ENCODE measurements at regions of chr10 and their contacts with region 1.

Region 1: DNA sequence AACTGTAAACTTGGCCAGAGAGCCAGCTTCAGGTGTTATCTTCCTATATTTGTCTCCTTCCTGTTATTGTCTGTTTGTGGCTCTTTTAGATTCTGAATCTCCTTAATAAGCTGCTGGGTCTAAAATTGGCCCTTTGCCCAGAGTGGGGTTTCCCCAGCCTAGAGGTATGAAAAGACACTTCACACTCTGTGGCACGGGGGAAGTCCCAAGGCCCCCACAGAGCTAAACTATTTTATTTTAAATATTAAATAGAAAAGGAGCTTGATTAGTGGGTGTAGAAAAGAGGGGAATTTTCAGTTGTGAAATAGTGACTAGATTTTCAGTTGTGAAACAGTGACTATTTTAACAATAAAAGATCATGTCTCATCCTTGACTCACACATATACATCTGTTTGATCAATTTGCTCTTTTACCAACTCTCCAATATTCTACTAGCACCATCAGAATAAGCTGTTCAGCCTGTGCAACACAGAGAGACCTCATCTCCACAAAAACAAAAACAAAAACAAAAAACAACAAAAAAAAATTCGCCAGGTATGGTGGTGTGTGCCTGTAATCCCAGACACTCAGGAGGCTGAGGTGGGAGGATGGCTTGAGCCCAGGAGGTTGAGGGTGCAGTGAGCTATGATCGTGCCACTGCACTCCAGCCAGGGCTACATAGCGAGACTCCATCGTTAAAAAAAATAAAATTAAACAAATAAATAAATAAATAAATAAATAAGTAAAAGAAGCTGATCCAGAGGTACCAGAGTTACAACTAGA is 24.9 kb upstream of the ADO start:
- DNase-seq: peak; percentile 91
- ATAC-seq: peak; percentile 99
- H3K4me3 ChIP-seq: peak overlapping the region in 1 of 5 experiments; percentile 21
- H3K4me3 Mint-ChIP-seq: peak overlapping the region; percentile 35
- H3K27ac ChIP-seq: peak overlapping the region; percentile 38 to 60
- H3K27ac Mint-ChIP-seq: peak overlapping the region; percentile 47
- H3K4me1 ChIP-seq: peaks cover 25 to 27% of the 10 kb centered on the region in 2 donors
- H3K4me1 Mint-ChIP-seq: peaks cover 33% of the 10 kb centered on the region
- H3K27me3 ChIP-seq: no peaks in the 10 kb centered on the region
- H3K27me3 Mint-ChIP-seq: no peaks in the 10 kb centered on the region
- CTCF ChIP-seq: no peak

Region 2: DNA sequence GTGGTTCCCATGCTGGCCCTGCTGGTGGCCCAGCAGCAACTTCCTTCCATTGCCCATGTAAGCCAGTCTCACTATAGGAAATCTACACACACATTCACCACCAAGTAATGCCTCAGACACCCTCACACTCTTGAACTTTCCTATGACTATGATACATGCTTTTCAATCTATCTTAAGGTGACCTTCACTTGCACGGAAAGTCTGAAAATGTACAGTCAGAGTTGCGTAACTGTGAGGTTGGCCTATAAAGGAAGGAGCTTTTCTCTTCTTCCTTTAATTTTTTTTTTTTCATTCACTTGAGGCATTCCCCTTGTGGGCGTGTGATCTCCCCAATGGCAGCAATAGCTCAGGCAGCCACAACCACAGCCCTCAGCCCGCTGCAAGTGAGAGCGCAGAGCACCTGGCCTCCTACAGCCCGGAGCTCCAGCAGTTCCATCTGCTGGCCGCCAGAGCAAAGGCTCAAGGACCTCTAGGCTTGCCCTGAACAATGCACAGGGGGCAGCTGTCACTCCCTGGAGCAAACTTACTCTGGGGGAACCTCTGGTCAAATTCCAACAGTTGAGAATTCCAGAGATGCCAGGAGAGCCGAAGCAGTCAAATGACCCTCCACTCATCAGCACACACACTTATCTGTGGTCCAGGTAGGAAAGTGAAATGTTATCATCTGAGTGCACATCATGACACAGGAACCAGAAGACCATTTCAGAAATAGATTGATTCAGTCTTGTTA is 98.3 kb before region 1 on chr10:
- CTCF ChIA-PET with region 1: interaction called, 5 read pairs
- POLR2A ChIA-PET with region 1: no interaction called
- intact Hi-C with region 1: loop called (anchors 2 kb)
- DNase-seq: peak; percentile 82
- ATAC-seq: peak; percentile 97
- H3K4me3 ChIP-seq: no peak overlapping the region
- H3K4me3 Mint-ChIP-seq: peak overlapping the region; percentile 21
- H3K27ac ChIP-seq: no peak overlapping the region
- H3K27ac Mint-ChIP-seq: peak overlapping the region; percentile 51
- H3K4me1 ChIP-seq: peaks cover 14 to 17% of the 10 kb centered on the region in 2 donors
- H3K4me1 Mint-ChIP-seq: peaks cover 16% of the 10 kb centered on the region
- H3K27me3 ChIP-seq: no peaks in the 10 kb centered on the region
- H3K27me3 Mint-ChIP-seq: peaks cover 4% of the 10 kb centered on the region
- CTCF ChIP-seq: peak; percentile 53

Region 3: DNA sequence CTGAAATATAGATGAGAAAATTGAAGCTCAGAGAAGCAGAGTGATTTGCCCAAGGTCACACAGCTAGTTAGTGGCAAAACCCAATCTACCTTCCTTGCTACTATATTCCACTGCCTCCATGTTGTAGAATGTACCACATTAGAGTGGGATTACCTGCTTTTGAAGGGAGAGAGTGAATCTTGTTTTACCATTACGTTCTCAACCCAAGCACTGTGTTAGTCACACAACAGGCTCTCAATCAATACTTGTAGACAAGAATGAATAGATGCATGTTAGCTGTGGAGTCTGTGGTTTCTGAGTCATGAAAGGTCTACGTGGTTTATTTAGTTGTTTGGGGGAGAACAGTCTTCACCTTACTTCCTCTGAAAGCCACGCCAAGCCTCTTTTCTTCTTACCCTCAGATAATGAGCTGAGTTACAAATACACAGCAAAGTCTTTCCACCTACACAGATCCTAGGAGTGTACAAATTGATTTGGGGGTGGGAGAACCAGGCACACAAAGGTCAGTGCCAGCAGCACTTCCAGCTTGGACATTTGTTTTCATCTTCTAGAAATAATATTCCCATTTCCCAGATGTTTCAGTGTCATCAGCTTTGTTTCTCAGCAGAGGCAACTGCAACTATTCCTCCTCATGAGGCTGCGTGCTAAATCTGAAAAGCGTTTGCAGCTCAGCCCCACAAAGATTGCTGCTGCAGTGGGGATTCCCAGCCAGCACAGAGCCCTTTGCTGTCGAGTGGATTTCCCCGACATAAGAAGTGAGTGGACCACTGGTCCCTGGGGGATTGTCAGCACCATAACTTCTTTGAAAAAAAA is 46.6 kb before region 1 on chr10:
- CTCF ChIA-PET with region 1: no interaction called
- POLR2A ChIA-PET with region 1: no interaction called
- intact Hi-C with region 1: loop called (anchors 2 kb)
- DNase-seq: peak; percentile 80
- ATAC-seq: peak; percentile 75
- H3K4me3 ChIP-seq: no peak overlapping the region
- H3K4me3 Mint-ChIP-seq: no peak overlapping the region
- H3K27ac ChIP-seq: peak overlapping the region in 1 of 2 donors; percentile 79
- H3K27ac Mint-ChIP-seq: peak overlapping the region; percentile 93
- H3K4me1 ChIP-seq: peaks cover 38 to 42% of the 10 kb centered on the region in 2 donors
- H3K4me1 Mint-ChIP-seq: peaks cover 4% of the 10 kb centered on the region
- H3K27me3 ChIP-seq: no peaks in the 10 kb centered on the region
- H3K27me3 Mint-ChIP-seq: no peaks in the 10 kb centered on the region
- CTCF ChIP-seq: no peak

Region 4: GRCh38 chr10:62742536-62743061 is 37.1 kb before region 1 on chr10:
- CTCF ChIA-PET with region 1: no interaction called
- POLR2A ChIA-PET with region 1: no interaction called
- intact Hi-C with region 1: loop called (anchors 2 kb)
- DNase-seq: peak; percentile 65
- ATAC-seq: peak; percentile 78
- H3K4me3 ChIP-seq: no peak overlapping the region
- H3K4me3 Mint-ChIP-seq: peak overlapping the region; percentile 69
- H3K27ac ChIP-seq: no peak overlapping the region
- H3K27ac Mint-ChIP-seq: peak overlapping the region; percentile 80
- H3K4me1 ChIP-seq: peaks cover 13% of the 10 kb centered on the region in 2 donors
- H3K4me1 Mint-ChIP-seq: peaks cover 14% of the 10 kb centered on the region
- H3K27me3 ChIP-seq: no peaks in the 10 kb centered on the region
- H3K27me3 Mint-ChIP-seq: no peaks in the 10 kb centered on the region
- CTCF ChIP-seq: no peak

Region 5: GRCh38 chr10:62804356-62805230 is 24.9 kb after region 1 on chr10 and contains the start of gene ADO:
- CTCF ChIA-PET with region 1: interaction called, 5 read pairs
- POLR2A ChIA-PET with region 1: no interaction called
- intact Hi-C with region 1: loop called (anchors 2 kb)
- DNase-seq: peak; percentile 92
- ATAC-seq: peak; percentile 87
- H3K4me3 ChIP-seq: peak within 1 kb of the TSS; percentile 79 to 99 (median 92)
- H3K4me3 Mint-ChIP-seq: peak within 1 kb of the TSS; percentile 98
- H3K27ac ChIP-seq: peak within 1 kb of the TSS; percentile 96 to 98
- H3K27ac Mint-ChIP-seq: peak within 1 kb of the TSS; percentile 99
- H3K4me1 ChIP-seq: peaks cover 26 to 29% of the 10 kb centered on the region in 2 donors
- H3K4me1 Mint-ChIP-seq: peaks cover 44% of the 10 kb centered on the region
- H3K27me3 ChIP-seq: no peaks in the 10 kb centered on the region
- H3K27me3 Mint-ChIP-seq: no peaks in the 10 kb centered on the region
- CTCF ChIP-seq: no peak
- total RNA-seq, gene ADO: 18.4 and 19.1 TPM in 2 replicates

Region 6: GRCh38 chr10:63268798-63269503 is 489.3 kb after region 1 on chr10:
- CTCF ChIA-PET with region 1: no interaction called
- POLR2A ChIA-PET with region 1: no interaction called
- intact Hi-C with region 1: no loop called
- DNase-seq: peak; percentile 93
- ATAC-seq: peak; percentile 89
- H3K4me3 ChIP-seq: peak overlapping the region; percentile 64 to 100 (median 95)
- H3K4me3 Mint-ChIP-seq: peak overlapping the region; percentile 100
- H3K27ac ChIP-seq: peak overlapping the region; percentile 85 to 94
- H3K27ac Mint-ChIP-seq: peak overlapping the region; percentile 99
- H3K4me1 ChIP-seq: peaks cover 14 to 18% of the 10 kb centered on the region in 2 donors
- H3K4me1 Mint-ChIP-seq: peaks cover 31% of the 10 kb centered on the region
- H3K27me3 ChIP-seq: no peaks in the 10 kb centered on the region
- H3K27me3 Mint-ChIP-seq: no peaks in the 10 kb centered on the region
- CTCF ChIP-seq: peak; percentile 43

Measured in B cell (primary cell).